KBM-7 (cell line): ENCODE measurements at regions of chr21 and their contacts with region 1.

Region 1: DNA sequence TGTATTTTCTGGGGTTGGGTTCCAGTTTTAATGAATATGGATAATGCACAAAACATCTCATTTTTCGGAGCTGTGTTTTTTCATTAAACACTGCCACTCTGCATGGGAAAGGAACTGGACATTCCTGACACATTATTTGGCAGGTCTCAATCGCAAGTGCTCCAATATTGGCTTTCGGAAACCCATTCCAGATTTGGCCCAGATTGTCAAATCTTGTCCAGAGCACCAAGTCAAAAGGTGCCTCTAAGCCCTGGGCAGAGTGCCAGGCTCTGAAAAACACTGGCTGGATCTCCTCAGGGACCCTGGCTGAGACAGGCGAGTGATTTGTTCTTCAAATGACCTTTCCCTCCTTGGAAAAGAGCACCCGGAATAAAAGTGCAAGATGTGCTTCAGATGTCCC is 68.4 kb upstream of the MRPS6 start:
- DNase-seq: no peak

Region 2: DNA sequence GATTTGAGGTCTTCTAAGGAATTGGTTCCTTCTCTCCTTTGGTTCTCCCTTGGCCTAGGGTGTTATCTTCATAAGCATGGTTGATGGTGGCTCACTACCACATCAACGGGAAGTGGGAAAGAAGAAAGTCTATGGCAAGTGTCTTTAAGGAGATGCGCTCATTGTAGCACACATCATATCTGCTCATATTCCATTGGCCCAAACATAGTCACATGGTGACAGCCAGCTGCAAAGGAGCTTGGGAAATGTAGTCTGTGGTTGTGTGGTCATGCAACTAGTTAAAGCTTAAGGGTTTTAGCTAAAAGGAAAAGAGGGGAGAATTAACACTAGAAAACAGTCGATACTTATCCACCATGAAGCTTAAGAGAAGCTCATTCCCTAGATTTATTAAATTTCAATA is 57.0 kb after region 1 on chr21:
- in situ Hi-C with region 1: loop called (anchors 10 kb)
- DNase-seq: no peak